ENCODE measurements at regions of chr1 and their contacts with region 1.

Region 1: GRCh38 chr1:45686317-45687013 is at the start of gene GPBP1L1:
- DNase-seq: peak; percentile 91
- ATAC-seq: peak; percentile 81
- H3K4me3 ChIP-seq: peak within 1 kb of the TSS; percentile 83 to 98 (median 93)
- H3K27ac ChIP-seq: peak within 1 kb of the TSS; percentile 99
- H3K4me1 ChIP-seq: peaks cover 49% of the 10 kb centered on the region
- H3K27me3 ChIP-seq: peaks cover 0 to 5% of the 10 kb centered on the region in 2 experiments; a peak in 2 of 5 replicates
- CTCF ChIP-seq: no peak
- EP300 ChIP-seq: no peak
- POLR2A ChIP-seq: peak; percentile 69 to 89
- RAD21 ChIP-seq: 0 out of 2 replicates have a peak, but pooled peaks have one; percentile 42
- total RNA-seq, gene GPBP1L1: 86.1 and 102 TPM in 2 replicates

Region 2: DNA sequence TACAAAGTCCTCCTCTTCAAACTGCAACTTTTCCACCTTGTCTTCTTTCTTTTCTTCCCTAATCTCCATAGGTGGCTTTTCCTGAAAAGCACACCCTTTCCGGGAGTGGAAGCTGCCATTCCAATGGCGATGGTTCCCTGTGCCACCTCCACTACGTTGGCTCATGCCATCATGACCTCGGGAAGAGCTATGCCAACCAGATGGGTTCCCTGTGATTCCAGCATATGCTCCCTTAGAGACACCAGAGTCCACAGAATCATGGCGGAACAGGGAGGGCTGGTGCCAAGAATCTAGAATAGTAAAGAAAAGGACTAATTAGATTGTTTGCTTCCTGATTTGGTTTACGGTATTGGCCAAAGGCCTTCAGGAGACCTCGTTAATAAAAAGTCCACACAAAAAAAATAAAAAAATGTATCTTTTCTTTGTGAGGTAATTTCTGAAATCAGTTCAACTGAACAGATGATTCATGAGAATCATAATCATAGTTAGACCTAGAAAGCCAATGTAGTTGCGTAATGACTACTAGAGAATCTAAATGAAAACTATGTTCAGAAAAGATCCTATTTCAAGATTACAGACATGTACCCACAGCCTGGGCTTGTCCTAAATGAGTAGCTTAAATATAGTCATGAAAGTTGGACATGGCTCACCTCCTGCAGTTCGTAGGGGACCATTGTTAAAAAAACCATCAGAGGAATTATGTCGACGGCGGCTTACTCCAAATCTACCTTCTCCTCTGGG is 31.8 kb before region 1 on chr1:
- CTCF ChIA-PET with region 1: no interaction called
- POLR2A ChIA-PET with region 1: interaction called, 29 read pairs
- in situ Hi-C with region 1: no loop called
- intact Hi-C with region 1: loop called (anchors 2 kb)
- DNase-seq: no peak
- ATAC-seq: no peak
- H3K4me3 ChIP-seq: no peak overlapping the region
- H3K27ac ChIP-seq: no peak overlapping the region
- H3K4me1 ChIP-seq: peaks cover 40% of the 10 kb centered on the region
- H3K27me3 ChIP-seq: no peaks in the 10 kb centered on the region
- CTCF ChIP-seq: no peak
- EP300 ChIP-seq: no peak
- POLR2A ChIP-seq: no peak
- RAD21 ChIP-seq: no peak

Region 3: DNA sequence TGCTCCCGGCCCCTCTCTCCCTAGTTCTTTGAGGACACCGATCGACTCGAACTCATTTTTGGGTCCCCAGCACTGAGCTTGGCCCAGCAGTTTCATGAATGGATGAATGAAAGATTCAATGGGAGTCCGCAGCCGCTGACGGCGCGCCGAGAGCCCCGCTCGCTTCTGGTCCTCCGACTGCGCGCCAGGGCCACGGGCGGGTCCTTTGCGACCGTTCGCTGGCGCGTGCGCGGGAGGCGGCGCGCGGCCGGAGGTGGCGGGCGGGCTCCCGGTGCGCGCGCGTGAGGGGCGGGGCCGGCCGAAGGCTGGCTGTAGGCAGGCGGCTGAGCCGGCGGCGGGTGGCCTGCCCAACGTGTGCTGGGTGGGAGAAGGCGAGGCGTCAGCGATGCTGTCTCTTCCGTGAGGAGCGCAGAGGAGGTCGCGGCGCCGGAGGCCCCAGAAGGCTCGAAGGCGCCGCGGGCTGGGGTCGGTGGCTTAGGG is 116.9 kb after region 1 on chr1 and contains the start of gene MAST2:
- CTCF ChIA-PET with region 1: no interaction called
- POLR2A ChIA-PET with region 1: interaction called, 3 read pairs
- in situ Hi-C with region 1: loop called (anchors 5 kb)
- intact Hi-C with region 1: loop called (anchors 2 kb)
- DNase-seq: peak; percentile 67
- ATAC-seq: peak; percentile 89
- H3K4me3 ChIP-seq: peak within 1 kb of the TSS; percentile 81 to 97 (median 90)
- H3K27ac ChIP-seq: peak within 1 kb of the TSS; percentile 53
- H3K4me1 ChIP-seq: peaks cover 32% of the 10 kb centered on the region
- H3K27me3 ChIP-seq: no peaks in the 10 kb centered on the region
- CTCF ChIP-seq: no peak
- EP300 ChIP-seq: no peak
- POLR2A ChIP-seq: peak; percentile 46 to 80
- RAD21 ChIP-seq: 0 out of 2 replicates have a peak, but pooled peaks have one; percentile 40
- total RNA-seq, gene MAST2: 14.3 and 15.3 TPM in 2 replicates

Region 4: GRCh38 chr1:45876000-45876617 is 189.6 kb after region 1 on chr1:
- CTCF ChIA-PET with region 1: no interaction called
- POLR2A ChIA-PET with region 1: interaction called, 10 read pairs
- in situ Hi-C with region 1: no loop called
- intact Hi-C with region 1: loop called (anchors 1 kb)
- DNase-seq: no peak
- ATAC-seq: no peak
- H3K4me3 ChIP-seq: no peak overlapping the region
- H3K27ac ChIP-seq: no peak overlapping the region
- H3K4me1 ChIP-seq: peaks cover 57% of the 10 kb centered on the region
- H3K27me3 ChIP-seq: no peaks in the 10 kb centered on the region
- CTCF ChIP-seq: no peak
- EP300 ChIP-seq: no peak
- POLR2A ChIP-seq: no peak
- RAD21 ChIP-seq: no peak

Region 5: GRCh38 chr1:46179138-46180081 is 492.9 kb after region 1 on chr1:
- CTCF ChIA-PET with region 1: no interaction called
- POLR2A ChIA-PET with region 1: no interaction called
- in situ Hi-C with region 1: no loop called
- intact Hi-C with region 1: loop called (anchors 2 kb)
- DNase-seq: peak; percentile 78
- ATAC-seq: peak; percentile 80
- H3K4me3 ChIP-seq: no peak overlapping the region
- H3K27ac ChIP-seq: no peak overlapping the region
- H3K4me1 ChIP-seq: peaks cover 67% of the 10 kb centered on the region
- H3K27me3 ChIP-seq: peaks cover 0 to 3% of the 10 kb centered on the region in 2 experiments; a peak in 1 of 5 replicates
- CTCF ChIP-seq: peak; percentile 94
- EP300 ChIP-seq: no peak
- POLR2A ChIP-seq: no peak
- RAD21 ChIP-seq: peak; percentile 88

Measured in HepG2 (cell line).